Naive thymus-derived CD4-positive, alpha-beta T cell (primary cell): ENCODE measurements at regions of chr2 and their contacts with region 1.

Region 1: GRCh38 chr2:37324786-37325624 is at the start of gene PRKD3:
- DNase-seq: peak; percentile 46 to 72 (median 65)
- ATAC-seq: peak; percentile 88
- H3K4me3 ChIP-seq: peak within 1 kb of the TSS; percentile 75
- H3K4me3 Mint-ChIP-seq: peak within 1 kb of the TSS; percentile 95 to 99 (median 98)
- H3K27ac ChIP-seq: peak within 1 kb of the TSS; percentile 73
- H3K27ac Mint-ChIP-seq: peak within 1 kb of the TSS; percentile 92 to 98 (median 95)
- H3K4me1 ChIP-seq: peaks cover 30 to 31% of the 10 kb centered on the region in 2 donors
- H3K4me1 Mint-ChIP-seq: peaks cover 18 to 48% (median 36%) of the 10 kb centered on the region in 7 donors
- H3K27me3 ChIP-seq: no peaks in the 10 kb centered on the region
- H3K27me3 Mint-ChIP-seq: peaks cover 0 to 56% (median 21%) of the 10 kb centered on the region in 5 donors
- total RNA-seq, gene PRKD3: 12.8 to 47.3 (median 46.4) TPM

Region 2: GRCh38 chr2:36069074-36069473 is 1255.9 kb before region 1 on chr2:
- CTCF ChIA-PET with region 1: no interaction called
- POLR2A ChIA-PET with region 1: no interaction called
- intact Hi-C with region 1: no loop called
- DNase-seq: no peak
- ATAC-seq: no peak
- H3K4me3 ChIP-seq: no peak overlapping the region
- H3K4me3 Mint-ChIP-seq: no peak overlapping the region
- H3K27ac ChIP-seq: no peak overlapping the region
- H3K27ac Mint-ChIP-seq: no peak overlapping the region
- H3K4me1 ChIP-seq: no peaks in the 10 kb centered on the region
- H3K4me1 Mint-ChIP-seq: no peaks in the 10 kb centered on the region
- H3K27me3 ChIP-seq: no peaks in the 10 kb centered on the region
- H3K27me3 Mint-ChIP-seq: peaks cover 0 to 13% (median 3%) of the 10 kb centered on the region in 5 donors

Region 3: DNA sequence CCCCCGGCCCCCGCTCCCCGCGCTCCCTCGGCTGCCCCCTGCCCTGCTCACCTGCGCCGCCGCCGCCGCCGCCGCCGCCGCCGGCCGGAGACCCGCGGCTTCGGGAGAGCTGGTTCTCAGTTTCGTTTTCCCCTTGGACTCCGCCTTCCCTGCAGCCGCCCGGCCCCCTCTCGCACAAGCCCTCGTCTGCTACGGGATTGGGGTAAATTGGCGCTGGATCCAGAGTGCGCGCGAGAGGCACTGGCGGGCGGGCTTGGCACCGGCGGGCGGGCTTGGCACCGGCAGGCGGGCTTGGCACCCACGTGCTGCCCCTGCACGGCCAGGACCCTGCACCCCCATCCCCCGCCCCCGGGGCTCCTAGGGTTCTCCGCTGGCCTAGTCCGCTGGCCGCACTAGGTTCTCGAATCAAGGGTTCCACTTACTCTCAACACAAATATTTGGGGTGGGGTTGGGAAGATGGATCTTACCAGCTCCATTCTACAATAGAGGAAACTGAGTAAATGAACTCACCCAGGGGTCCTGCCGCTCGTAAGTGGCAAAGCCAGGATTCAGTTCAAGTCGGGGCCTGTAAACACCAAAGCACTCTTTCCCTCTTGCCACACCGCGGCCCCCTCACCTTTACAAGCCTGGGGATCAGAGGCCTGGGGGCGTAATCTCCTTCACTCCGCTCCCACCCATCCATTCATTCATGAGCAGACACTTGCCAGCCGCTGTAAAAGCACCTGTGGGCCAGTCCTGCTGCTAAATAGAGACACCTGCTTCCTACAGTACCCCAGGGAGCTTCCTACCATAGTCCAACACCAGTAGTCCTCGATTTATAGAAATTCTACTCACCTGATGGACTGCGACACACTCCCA is 167.9 kb before region 1 on chr2 and contains the start of gene EIF2AK2:
- CTCF ChIA-PET with region 1: no interaction called
- POLR2A ChIA-PET with region 1: no interaction called
- intact Hi-C with region 1: loop called in 1 of 2 experiments (anchors 2 kb)
- DNase-seq: peak; percentile 59 to 85 (median 80)
- ATAC-seq: peak; percentile 96
- H3K4me3 ChIP-seq: peak within 1 kb of the TSS; percentile 92
- H3K4me3 Mint-ChIP-seq: peak within 1 kb of the TSS; percentile 88 to 99 (median 94)
- H3K27ac ChIP-seq: peak within 1 kb of the TSS; percentile 81
- H3K27ac Mint-ChIP-seq: peak within 1 kb of the TSS; percentile 86 to 96 (median 92)
- H3K4me1 ChIP-seq: peaks cover 18 to 25% of the 10 kb centered on the region in 2 donors
- H3K4me1 Mint-ChIP-seq: peaks cover 29 to 57% (median 48%) of the 10 kb centered on the region in 7 donors
- H3K27me3 ChIP-seq: no peaks in the 10 kb centered on the region
- H3K27me3 Mint-ChIP-seq: peaks cover 0 to 4% (median 0%) of the 10 kb centered on the region in 5 donors
- total RNA-seq, gene EIF2AK2: 21.2 to 91.9 (median 24.2) TPM

Region 4: DNA sequence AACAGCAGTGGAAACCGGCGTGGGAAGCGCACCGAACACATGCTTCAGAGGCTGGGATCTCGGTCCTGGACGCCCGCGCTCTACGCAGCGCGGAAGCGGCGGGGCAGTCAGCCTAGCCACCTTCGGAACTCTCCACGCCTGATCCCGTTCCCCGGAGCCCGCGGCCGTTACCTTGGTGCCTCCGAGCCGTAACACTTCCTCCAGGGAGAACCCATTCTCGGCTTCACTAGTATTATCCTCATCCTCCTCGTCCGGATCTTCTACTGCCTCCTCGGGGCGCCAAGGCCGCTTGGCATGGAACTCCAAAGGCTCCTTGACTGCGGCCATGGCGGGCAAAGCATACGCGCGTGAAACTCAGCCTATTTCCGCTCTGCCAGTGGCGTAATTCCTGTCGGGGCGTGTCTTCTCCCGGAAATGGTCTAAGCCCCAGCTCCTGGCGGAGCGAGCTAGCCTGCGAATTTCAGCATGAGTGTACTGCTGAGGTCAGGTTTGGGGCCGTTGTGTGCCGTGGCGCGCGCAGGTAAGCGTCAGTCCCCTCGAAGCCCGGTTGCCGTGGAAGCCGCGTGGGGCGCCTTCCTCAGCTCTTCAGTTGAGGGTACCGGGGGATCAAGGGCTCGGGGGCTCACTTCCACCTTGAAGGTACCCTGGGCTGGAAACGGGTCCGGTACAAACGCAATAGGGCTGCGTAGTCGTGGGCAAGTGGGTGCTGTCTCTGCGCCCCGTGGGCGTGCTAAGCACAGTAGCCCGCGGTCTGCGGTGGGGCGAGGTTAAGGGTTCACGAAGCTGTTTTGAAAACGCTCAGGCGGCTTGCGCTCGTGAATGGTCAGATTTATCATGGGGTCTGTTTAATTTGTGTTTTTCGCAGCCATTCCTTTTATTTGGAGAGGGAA is 93.5 kb before region 1 on chr2 and contains the starts of genes CEBPZ and NDUFAF7:
- CTCF ChIA-PET with region 1: no interaction called
- POLR2A ChIA-PET with region 1: interaction called, 14 read pairs
- intact Hi-C with region 1: loop called (anchors 1 to 2 kb)
- DNase-seq: peak; percentile 71 to 87 (median 84)
- ATAC-seq: peak; percentile 95
- H3K4me3 ChIP-seq: peak within 1 kb of the TSS; percentile 84
- H3K4me3 Mint-ChIP-seq: no peak within 1 kb of the TSS
- H3K27ac ChIP-seq: peak within 1 kb of the TSS; percentile 93
- H3K27ac Mint-ChIP-seq: no peak within 1 kb of the TSS
- H3K4me1 ChIP-seq: peaks cover 31 to 39% of the 10 kb centered on the region in 2 donors
- H3K4me1 Mint-ChIP-seq: peaks cover 25 to 54% (median 43%) of the 10 kb centered on the region in 7 donors
- H3K27me3 ChIP-seq: no peaks in the 10 kb centered on the region
- H3K27me3 Mint-ChIP-seq: no peaks in the 10 kb centered on the region
- total RNA-seq, gene CEBPZ: 40.4 to 67.6 (median 56.4) TPM
- total RNA-seq, gene NDUFAF7: 21.6 to 38.2 (median 28.5) TPM

Region 5: DNA sequence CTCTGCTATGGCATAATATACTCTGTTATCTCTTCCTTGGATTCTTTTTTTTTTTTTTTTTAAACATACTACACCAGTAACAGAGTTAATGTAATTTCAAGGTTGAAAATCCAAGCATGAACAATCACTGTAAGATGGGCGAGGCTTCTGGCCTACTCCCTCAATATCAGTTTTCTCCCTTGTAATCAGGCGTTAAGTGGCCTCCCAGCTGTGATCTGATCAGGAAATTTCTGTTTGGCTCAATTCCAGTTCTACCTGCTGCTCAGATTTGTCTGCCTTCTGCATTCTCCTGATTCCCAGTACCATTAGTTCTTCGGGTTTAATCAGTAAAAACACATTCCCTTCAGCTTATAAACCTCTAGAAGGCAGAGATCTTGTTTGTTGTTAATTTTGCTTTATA is 19.0 kb before region 1 on chr2:
- CTCF ChIA-PET with region 1: interaction called, 4 read pairs
- POLR2A ChIA-PET with region 1: interaction called, 3 read pairs
- intact Hi-C with region 1: loop called in 1 of 2 experiments (anchors 2 kb)
- DNase-seq: no peak
- ATAC-seq: no peak
- H3K4me3 ChIP-seq: no peak overlapping the region
- H3K4me3 Mint-ChIP-seq: peak overlapping the region in 1 of 10 donors; percentile 47
- H3K27ac ChIP-seq: no peak overlapping the region
- H3K27ac Mint-ChIP-seq: peak overlapping the region in 3 of 9 donors; percentile 32 to 81 (median 34)
- H3K4me1 ChIP-seq: no peaks in the 10 kb centered on the region
- H3K4me1 Mint-ChIP-seq: peaks cover 0 to 84% (median 55%) of the 10 kb centered on the region in 7 donors
- H3K27me3 ChIP-seq: no peaks in the 10 kb centered on the region
- H3K27me3 Mint-ChIP-seq: no peaks in the 10 kb centered on the region

Region 6: DNA sequence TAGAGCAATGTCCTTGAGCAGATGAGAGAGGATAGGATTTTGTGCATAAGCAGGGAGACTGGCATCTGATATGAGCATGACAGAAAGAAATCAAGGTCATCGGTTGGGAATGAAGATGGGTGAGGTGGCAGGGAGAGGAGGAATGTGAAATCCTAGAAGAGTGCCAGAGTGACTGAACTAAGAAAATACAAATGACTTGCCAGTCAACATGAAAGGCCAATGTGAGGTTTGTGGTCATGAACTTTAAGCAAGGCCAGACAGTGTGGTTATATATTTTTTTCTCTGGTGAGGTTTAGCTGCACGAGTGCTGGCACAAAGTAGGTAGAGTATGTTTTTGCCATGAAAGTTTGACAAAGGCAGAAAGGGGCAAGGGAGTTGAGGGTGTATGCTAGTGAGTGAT is 40.7 kb after region 1 on chr2:
- CTCF ChIA-PET with region 1: no interaction called
- POLR2A ChIA-PET with region 1: no interaction called
- intact Hi-C with region 1: loop called in 1 of 2 experiments (anchors 2 kb)
- DNase-seq: no peak
- ATAC-seq: peak; percentile 34
- H3K4me3 ChIP-seq: no peak overlapping the region
- H3K4me3 Mint-ChIP-seq: no peak overlapping the region
- H3K27ac ChIP-seq: no peak overlapping the region
- H3K27ac Mint-ChIP-seq: no peak overlapping the region
- H3K4me1 ChIP-seq: peaks cover 14 to 21% of the 10 kb centered on the region in 2 donors
- H3K4me1 Mint-ChIP-seq: peaks cover 0 to 22% (median 12%) of the 10 kb centered on the region in 7 donors
- H3K27me3 ChIP-seq: no peaks in the 10 kb centered on the region
- H3K27me3 Mint-ChIP-seq: peaks cover 6 to 55% (median 24%) of the 10 kb centered on the region in 5 donors

Region 7: DNA sequence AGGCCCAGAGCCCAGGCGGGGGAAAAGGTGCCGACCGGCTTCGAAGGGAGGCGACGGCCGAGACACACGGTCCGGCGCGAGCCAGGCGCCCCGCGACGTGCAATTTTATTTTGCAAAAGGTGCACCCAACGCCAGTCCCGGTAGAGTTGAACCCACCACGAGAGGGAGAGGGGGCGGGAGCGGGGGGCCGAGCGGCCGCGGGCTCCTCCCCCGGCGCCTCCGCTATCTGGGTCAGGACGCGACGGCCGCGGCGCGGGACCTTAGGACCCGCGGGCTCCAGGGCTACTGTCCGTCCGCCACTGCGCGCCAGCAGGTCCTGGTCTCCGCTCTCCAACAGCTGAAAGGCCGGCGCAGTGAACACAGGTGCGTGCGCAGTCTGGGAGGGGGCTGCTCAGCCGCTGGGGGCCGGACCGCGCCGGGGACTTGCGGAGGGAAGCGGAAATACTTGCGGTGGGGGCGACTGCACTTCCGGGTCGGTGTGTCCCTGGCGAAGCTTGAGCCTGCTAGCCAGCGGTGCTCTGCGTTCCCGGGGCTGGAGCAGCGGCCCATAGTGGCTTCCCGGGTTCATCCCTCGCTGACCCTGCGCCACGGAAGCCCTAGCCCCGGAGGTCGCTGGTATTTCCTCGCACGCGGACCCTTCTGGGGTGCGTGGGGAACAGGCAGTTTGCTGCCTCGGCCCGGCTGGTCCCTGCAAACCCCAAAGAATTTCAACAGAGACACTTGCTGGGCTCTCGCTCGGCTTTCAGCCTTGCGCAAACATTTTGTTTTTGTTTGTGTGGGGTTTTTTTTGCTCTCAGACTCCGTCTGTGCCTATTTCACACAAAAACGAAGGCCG is 600.3 kb after region 1 on chr2 and contains the start of gene RMDN2:
- CTCF ChIA-PET with region 1: no interaction called
- POLR2A ChIA-PET with region 1: interaction called, 7 read pairs
- intact Hi-C with region 1: loop called in 1 of 2 experiments (anchors 1 kb)
- DNase-seq: peak; percentile 57 to 78 (median 71)
- ATAC-seq: peak; percentile 88
- H3K4me3 ChIP-seq: peak within 1 kb of the TSS; percentile 81
- H3K4me3 Mint-ChIP-seq: peak within 1 kb of the TSS; percentile 89 to 100 (median 98)
- H3K27ac ChIP-seq: peak within 1 kb of the TSS; percentile 73
- H3K27ac Mint-ChIP-seq: peak within 1 kb of the TSS; percentile 67 to 100 (median 96)
- H3K4me1 ChIP-seq: peaks cover 0 to 8% of the 10 kb centered on the region in 2 donors
- H3K4me1 Mint-ChIP-seq: peaks cover 8 to 50% (median 24%) of the 10 kb centered on the region in 7 donors
- H3K27me3 ChIP-seq: no peaks in the 10 kb centered on the region
- H3K27me3 Mint-ChIP-seq: peaks cover 0 to 60% (median 0%) of the 10 kb centered on the region in 5 donors
- total RNA-seq, gene RMDN2: 0.39 to 8.1 (median 5.1) TPM

Region 8: DNA sequence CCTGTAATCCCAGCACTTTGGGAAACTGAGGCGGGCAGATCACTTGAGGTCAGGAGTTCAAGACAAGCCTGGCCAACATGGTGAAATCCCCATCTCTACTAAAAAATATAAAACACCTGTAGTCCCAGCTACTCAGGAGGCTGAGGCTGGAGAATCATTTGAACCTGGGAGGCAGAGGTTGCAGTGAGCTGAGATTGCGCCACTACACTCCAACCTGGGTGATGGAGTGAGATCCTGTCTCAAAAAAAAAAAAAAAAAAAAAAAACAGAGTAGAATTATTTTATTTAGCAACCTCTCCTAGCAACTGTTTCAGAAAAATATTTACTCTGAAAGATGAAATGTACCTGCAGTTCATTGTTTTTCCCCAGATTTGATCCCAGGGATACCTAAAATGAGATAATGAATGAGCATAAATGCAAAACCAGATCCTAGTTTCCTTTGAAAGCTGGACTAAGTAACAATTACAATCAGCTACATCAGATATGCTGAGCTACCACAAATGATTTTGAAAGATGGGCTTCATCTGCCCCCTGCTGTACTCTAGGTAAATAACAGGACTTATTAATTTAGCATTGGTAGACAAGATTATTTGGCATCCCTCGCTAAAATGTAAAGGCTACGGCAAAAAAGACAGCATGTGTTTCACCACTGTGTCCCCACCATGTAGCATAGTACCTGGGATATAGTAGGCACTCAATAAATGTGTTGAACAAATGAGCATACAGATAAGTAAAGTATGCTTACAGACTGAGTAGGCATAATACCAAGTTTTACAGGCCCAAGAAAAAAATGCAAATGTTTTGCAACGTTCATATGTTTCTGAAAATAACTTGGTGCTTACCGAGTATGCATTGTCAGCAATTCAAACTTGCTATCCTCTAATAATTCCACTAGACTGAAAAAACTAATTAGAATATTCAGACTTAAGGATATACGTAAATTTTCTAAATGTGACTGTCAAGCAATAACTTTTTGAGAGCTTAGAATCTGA is 949.6 kb after region 1 on chr2:
- CTCF ChIA-PET with region 1: no interaction called
- POLR2A ChIA-PET with region 1: no interaction called
- intact Hi-C with region 1: no loop called
- DNase-seq: peak in 7 of 9 donors; percentile 17 to 44 (median 32)
- ATAC-seq: peak; percentile 77
- H3K4me3 ChIP-seq: no peak overlapping the region
- H3K4me3 Mint-ChIP-seq: no peak overlapping the region
- H3K27ac ChIP-seq: no peak overlapping the region
- H3K27ac Mint-ChIP-seq: peak overlapping the region in 1 of 9 donors; percentile 1
- H3K4me1 ChIP-seq: no peaks in the 10 kb centered on the region
- H3K4me1 Mint-ChIP-seq: peaks cover 0 to 7% (median 0%) of the 10 kb centered on the region in 7 donors
- H3K27me3 ChIP-seq: no peaks in the 10 kb centered on the region
- H3K27me3 Mint-ChIP-seq: peaks cover 0 to 5% (median 0%) of the 10 kb centered on the region in 5 donors